ENCODE measurements at regions of chr4 and their contacts with region 1.

Region 1: GRCh38 chr4:53196882-53197771 is 168.7 kb downstream of the SCFD2 start:
- DNase-seq: peak; percentile 31
- CTCF ChIP-seq: peak; percentile 55

Region 2: DNA sequence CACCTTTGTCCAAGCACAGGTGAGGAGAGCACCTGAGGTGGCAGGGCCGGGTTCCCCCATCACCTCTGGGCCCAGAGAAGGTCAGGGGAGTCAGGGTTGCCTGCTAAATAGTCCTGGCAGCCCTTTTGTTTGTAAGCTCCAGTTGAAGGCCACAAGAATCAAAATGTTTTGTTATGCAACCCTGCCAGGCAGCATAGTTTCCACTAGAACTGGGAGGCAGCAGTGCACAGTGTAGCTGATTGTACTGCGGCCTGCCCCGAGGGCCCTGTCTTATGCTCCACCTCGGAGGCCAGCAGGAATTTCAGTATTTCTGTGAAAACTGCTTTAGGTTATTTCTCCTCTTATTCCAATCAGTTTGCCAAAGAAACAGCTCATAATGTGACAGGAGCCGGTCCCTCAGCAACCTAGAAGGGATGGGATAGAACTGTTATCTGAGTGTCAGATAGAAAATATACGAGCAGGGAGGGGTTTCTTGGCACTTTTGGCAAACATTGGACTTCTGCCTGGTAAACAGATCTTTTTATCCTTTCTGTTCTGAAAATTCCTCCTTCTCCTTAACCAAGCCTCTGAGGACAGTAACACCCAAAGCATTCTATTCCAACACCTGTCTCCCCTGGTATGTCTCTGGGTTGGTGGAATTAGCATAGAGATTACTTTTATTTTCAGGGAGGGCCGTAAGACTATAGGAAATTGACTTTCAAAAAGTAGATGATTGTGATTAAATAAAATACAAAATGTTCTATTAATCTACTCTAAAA is 300.5 kb after region 1 on chr4:
- in situ Hi-C with region 1: no loop called
- DNase-seq: no peak
- CTCF ChIP-seq: no peak

Region 3: GRCh38 chr4:53804719-53805118 is 607.6 kb after region 1 on chr4:
- in situ Hi-C with region 1: loop called (anchors 25 kb)
- DNase-seq: peak; percentile 43
- CTCF ChIP-seq: peak; percentile 72

Region 4: GRCh38 chr4:54217642-54218495 is 1020.7 kb after region 1 on chr4:
- in situ Hi-C with region 1: loop called (anchors 25 kb)
- DNase-seq: peak; percentile 73
- CTCF ChIP-seq: peak; percentile 76